Activated naive CD4-positive, alpha-beta T cell treated with anti-CD3 and anti-CD28 coated beads, Interleukin-2, amount 10 ng/mL, durations not matched to agents 7 days and 5 days (primary cell): ENCODE measurements at regions of chr19 and their contacts with region 1.

Region 1: DNA sequence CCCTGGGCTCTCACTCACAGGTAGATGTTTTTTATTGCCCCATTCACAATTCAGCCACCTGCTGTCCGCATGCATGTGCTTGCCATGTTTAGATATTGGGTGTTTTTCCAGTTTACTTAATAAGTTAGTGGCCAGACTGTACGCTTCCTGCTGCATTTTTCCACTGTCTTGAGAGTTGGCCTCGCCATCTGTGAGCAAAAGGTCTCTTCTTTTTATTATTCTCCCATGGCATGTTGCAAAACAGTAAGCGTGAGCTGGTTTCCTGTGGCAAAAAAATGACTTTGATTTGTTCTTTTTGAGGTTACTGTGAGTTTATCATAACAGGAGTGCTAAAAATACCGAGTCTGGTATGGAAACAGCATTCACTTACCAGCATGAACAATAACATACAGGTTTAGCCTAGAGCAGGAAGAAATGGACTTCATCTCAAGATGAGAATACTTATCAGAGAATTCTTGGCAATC is 46.0 kb downstream of the SAE1 start:
- DNase-seq: peak; percentile 55
- H3K4me3 Mint-ChIP-seq: peak overlapping the region; percentile 27
- H3K27ac Mint-ChIP-seq: peak overlapping the region; percentile 94
- H3K4me1 Mint-ChIP-seq: peaks cover 64% of the 10 kb centered on the region
- H3K27me3 Mint-ChIP-seq: no peaks in the 10 kb centered on the region

Region 2: DNA sequence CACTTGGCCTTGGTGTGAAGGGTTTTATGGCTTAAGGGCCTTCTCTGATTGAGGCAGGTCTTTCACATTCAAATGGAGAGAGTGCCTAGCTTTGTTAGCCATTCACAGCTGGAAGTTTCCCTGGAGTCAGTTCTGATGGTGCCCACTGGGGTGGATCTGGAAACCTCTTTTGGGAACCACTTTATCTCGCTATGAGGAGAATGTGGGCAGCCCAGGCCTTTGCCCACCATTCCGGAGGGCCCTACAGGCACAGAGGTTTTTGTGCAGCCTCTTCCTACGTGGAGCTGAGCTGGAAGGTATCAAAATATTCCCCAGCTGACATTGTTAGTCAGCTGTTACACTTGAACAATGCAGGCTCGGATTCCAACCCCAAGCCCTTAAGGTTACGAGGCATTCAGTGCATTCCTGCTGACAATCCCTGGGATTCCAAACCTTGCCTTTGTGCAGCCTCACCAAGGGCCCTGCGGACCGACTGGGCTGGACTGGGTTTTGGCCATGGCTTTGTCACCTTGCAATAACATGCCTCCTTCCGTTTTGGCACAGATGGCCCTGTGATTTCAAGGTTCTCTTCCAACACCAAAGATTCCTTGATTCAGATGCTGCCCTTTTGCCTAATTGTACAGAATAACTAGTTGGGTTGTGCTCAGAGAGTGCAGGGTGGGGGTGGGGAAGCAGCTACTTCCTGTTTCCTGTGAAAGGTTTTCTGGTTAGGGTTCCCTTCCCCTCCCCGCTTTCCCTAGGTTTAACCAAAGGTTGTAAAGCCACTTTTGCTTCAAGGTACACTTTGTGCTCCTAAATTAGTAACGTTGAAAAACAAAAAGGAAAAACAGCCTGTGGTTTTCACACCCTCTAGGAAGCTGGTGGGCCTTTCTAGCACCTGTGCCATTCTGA is 19.0 kb before region 1 on chr19:
- CTCF ChIA-PET with region 1: interaction called, 19 read pairs
- DNase-seq: peak; percentile 64
- H3K4me3 Mint-ChIP-seq: peak overlapping the region; percentile 67
- H3K27ac Mint-ChIP-seq: peak overlapping the region; percentile 97
- H3K4me1 Mint-ChIP-seq: peaks cover 69% of the 10 kb centered on the region
- H3K27me3 Mint-ChIP-seq: no peaks in the 10 kb centered on the region

Region 3: GRCh38 chr19:47363758-47364531 is 187.3 kb after region 1 on chr19:
- CTCF ChIA-PET with region 1: no interaction called
- DNase-seq: no peak
- H3K4me3 Mint-ChIP-seq: no peak overlapping the region
- H3K27ac Mint-ChIP-seq: no peak overlapping the region
- H3K4me1 Mint-ChIP-seq: no peaks in the 10 kb centered on the region
- H3K27me3 Mint-ChIP-seq: no peaks in the 10 kb centered on the region